Activated CD4-positive, alpha-beta T cell treated with anti-CD3 and anti-CD28 coated beads for 36 hours (primary cell): ENCODE measurements at regions of chr1 and their contacts with region 1.

Region 1: DNA sequence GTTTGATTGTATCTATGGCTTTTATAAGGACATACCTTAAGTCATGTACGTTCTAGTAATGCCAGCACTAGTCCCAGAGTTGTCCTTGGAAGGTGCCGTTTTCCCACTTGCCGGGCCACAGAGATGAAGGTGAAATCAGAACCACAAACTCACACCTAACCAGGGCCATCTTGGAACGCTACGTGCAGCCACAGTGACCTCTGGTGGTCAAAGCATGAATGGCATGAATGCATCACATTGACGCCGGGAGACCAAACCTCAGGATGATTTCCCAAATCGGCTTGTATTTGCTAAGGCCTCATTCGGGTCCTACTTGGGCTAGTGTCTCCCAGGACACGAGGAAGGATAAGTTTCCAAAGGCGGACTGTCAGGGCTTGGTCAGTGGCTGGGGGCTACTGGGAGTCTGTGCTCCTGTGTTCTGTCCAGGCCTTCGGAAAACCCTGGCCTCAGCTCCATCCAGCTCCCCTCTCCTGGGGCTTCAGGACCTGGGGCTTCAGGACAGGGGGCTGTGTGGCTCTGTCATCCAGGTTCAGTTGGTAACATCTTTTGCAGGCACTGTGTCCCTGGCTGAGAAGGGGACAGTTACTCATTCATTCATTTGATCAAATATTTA is 260.5 kb downstream of the PRDM2 start:
- DNase-seq: peak; percentile 79
- ATAC-seq: peak; percentile 61
- H3K4me3 Mint-ChIP-seq: no peak overlapping the region
- H3K27ac Mint-ChIP-seq: no peak overlapping the region
- H3K4me1 Mint-ChIP-seq: no peaks in the 10 kb centered on the region
- H3K27me3 Mint-ChIP-seq: peaks cover 26% of the 10 kb centered on the region

Region 2: GRCh38 chr1:13517193-13517812 is 443.2 kb before region 1 on chr1:
- CTCF ChIA-PET with region 1: interaction called, 3 read pairs
- POLR2A ChIA-PET with region 1: no interaction called
- intact Hi-C with region 1: loop called in 1 of 2 experiments (anchors 10 kb)
- DNase-seq: peak; percentile 62
- ATAC-seq: peak; percentile 44
- H3K4me3 Mint-ChIP-seq: no peak overlapping the region
- H3K27ac Mint-ChIP-seq: no peak overlapping the region
- H3K4me1 Mint-ChIP-seq: no peaks in the 10 kb centered on the region
- H3K27me3 Mint-ChIP-seq: peaks cover 39% of the 10 kb centered on the region

Region 3: GRCh38 chr1:13662493-13662892 is 298.0 kb before region 1 on chr1:
- CTCF ChIA-PET with region 1: interaction called, 7 read pairs
- POLR2A ChIA-PET with region 1: no interaction called
- intact Hi-C with region 1: loop called (anchors 1 kb)
- DNase-seq: no peak
- ATAC-seq: no peak
- H3K4me3 Mint-ChIP-seq: no peak overlapping the region
- H3K27ac Mint-ChIP-seq: no peak overlapping the region
- H3K4me1 Mint-ChIP-seq: peaks cover 4% of the 10 kb centered on the region
- H3K27me3 Mint-ChIP-seq: peaks cover 5% of the 10 kb centered on the region

Region 4: DNA sequence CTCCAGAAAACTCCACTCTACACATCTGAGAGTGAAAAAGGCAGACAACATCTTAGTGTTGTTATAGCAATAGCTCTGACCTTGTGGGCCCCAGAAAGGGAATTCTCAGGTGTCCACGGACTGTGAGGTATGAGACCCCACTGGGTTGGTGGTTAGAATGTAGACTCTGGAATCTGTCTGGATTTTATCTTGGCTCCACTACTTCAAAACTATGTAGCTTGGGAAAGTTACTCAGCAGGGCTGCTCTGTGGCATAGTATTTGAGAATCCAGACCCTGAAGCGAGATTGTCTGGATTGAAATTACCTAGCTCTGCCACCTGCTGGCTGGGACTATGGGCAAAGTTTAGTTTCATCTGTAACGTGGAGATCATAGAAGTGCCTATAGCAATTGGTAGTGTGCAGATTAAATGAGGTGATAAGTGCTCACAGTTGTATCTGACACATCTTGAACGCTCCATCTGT is 234.7 kb before region 1 on chr1:
- CTCF ChIA-PET with region 1: no interaction called
- POLR2A ChIA-PET with region 1: no interaction called
- intact Hi-C with region 1: loop called in 1 of 2 experiments (anchors 5 kb)
- DNase-seq: peak; percentile 75
- ATAC-seq: peak; percentile 40
- H3K4me3 Mint-ChIP-seq: no peak overlapping the region
- H3K27ac Mint-ChIP-seq: no peak overlapping the region
- H3K4me1 Mint-ChIP-seq: peaks cover 47% of the 10 kb centered on the region
- H3K27me3 Mint-ChIP-seq: no peaks in the 10 kb centered on the region

Region 5: DNA sequence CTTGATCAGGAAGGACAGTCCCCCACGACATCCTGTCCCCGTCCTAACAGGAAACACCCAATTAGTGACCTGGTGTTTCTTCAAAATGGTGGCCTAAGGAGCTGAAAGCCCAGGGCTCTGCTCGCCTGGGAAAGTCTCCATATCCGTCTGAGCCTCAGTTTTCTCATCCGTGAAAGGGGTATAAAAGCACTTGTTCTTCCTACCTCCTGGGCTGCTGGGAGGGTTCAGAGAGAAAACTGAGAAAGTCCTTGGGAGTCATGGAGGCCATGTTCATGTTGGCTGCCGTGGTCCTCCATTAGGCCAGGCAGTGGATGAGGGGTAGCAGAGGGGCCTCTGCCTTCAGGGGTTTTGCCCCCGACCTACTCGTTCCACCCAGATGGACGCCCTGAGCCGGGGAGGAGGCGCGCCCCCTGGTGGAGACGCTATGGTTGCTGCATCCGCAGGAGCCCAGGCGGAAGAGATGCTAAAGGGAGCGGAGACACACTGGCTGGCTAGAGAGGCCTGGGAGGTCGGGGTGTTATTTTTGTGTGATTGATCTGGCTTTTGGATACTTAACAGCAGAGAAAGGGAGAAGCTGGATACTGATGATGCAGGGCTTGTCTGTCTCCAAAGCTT is 147.0 kb before region 1 on chr1:
- CTCF ChIA-PET with region 1: no interaction called
- POLR2A ChIA-PET with region 1: no interaction called
- intact Hi-C with region 1: loop called in 1 of 2 experiments (anchors 10 kb)
- DNase-seq: peak; percentile 83
- ATAC-seq: peak; percentile 70
- H3K4me3 Mint-ChIP-seq: no peak overlapping the region
- H3K27ac Mint-ChIP-seq: no peak overlapping the region
- H3K4me1 Mint-ChIP-seq: peaks cover 10% of the 10 kb centered on the region
- H3K27me3 Mint-ChIP-seq: no peaks in the 10 kb centered on the region

Region 6: DNA sequence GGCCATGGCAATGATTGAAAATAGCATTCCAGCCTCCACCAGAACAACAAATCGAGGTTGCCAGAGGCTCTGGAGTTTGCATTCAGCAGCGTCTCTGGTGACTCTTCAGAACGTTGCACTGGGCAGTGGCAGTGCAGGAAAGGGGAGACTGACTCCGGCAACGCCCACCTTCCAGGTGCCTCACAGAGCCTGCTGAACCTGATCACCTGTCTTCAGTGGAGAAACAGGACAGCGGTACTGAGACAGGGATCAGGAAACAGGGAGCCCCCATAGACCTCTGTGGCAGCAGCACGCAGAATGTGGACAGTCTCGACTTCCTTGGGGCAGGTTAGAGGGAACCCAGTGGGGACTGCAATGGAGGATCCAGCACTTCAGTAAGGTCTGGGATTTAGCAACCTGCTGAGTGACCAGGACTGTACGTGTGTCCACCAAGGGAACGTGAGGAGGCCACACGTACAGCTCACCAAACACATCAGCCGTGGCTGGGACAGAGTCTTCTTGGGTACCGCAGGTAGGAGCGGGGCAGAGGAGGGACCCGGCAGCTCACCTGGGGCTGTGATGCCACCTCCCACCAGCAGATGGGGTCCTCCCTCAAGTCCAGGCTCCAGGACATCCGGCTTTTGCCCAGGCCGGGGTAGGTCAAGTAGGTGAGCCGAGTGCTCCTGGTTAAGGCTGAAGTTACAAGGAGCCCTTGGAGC is 131.9 kb before region 1 on chr1:
- CTCF ChIA-PET with region 1: interaction called, 4 read pairs
- POLR2A ChIA-PET with region 1: no interaction called
- intact Hi-C with region 1: loop called in 1 of 2 experiments (anchors 1 kb)
- DNase-seq: peak; percentile 67
- ATAC-seq: peak; percentile 66
- H3K4me3 Mint-ChIP-seq: no peak overlapping the region
- H3K27ac Mint-ChIP-seq: no peak overlapping the region
- H3K4me1 Mint-ChIP-seq: no peaks in the 10 kb centered on the region
- H3K27me3 Mint-ChIP-seq: peaks cover 3% of the 10 kb centered on the region